B cell (primary cell): ENCODE measurements at regions of chr1 and their contacts with region 1.

Region 1: DNA sequence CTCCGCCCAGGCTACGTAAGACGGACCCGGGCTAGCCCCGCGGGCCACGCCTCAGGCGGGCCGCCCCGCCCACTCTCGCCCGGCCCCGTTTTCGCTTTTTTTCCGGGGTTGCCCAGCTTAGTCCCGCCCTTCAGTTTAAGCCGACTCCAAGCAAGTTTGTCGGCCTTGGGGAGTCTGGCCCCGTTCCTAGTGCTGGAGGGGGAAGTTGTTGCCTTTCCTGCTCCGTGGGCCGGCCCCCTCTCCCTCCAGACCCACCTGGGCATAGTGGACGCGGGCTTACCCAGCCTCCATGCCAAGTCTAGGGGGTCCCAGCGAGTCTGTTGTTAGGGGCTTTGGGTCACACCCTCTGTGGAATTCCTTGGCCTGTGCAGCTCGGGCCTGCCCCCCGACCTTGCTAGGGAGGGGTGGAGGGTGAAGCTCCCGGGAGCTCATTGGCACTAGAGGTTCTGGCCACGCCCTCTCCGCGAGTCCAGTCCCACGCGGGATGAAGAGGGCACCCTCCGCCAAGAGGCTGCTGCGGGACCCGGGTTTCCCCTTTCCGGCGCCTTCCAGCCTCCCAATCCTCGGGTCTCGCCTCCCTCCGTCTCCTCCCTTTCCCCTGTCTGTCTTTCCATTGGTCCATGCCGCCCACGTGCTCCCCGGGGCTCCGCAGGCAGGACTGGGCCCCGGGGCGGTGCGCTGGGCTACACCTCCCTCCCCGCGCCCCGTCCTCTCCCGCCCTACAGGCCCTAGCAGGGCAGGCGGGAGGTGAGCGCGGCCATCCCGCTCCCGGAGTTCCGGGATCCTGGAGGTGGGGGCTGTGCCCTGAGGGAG is 3.3 kb downstream of the RUSC1 start:
- DNase-seq: peak; percentile 89
- ATAC-seq: peak; percentile 74
- H3K4me3 ChIP-seq: peak overlapping the region; percentile 64 to 100 (median 97)
- H3K4me3 Mint-ChIP-seq: peak overlapping the region; percentile 92
- H3K27ac ChIP-seq: peak overlapping the region; percentile 81 to 85
- H3K27ac Mint-ChIP-seq: peak overlapping the region; percentile 87
- H3K4me1 ChIP-seq: peaks cover 17 to 35% of the 10 kb centered on the region in 2 donors
- H3K4me1 Mint-ChIP-seq: peaks cover 32% of the 10 kb centered on the region
- H3K27me3 ChIP-seq: no peaks in the 10 kb centered on the region
- H3K27me3 Mint-ChIP-seq: no peaks in the 10 kb centered on the region
- CTCF ChIP-seq: no peak

Region 2: GRCh38 chr1:155208541-155209311 is 115.3 kb before region 1 on chr1 and contains the start of gene MTX1:
- CTCF ChIA-PET with region 1: interaction called, 20 read pairs
- POLR2A ChIA-PET with region 1: interaction called, 3 read pairs
- intact Hi-C with region 1: loop called (anchors 1 kb)
- DNase-seq: peak; percentile 95
- ATAC-seq: peak; percentile 79
- H3K4me3 ChIP-seq: peak within 1 kb of the TSS; percentile 67 to 94 (median 84)
- H3K4me3 Mint-ChIP-seq: peak within 1 kb of the TSS; percentile 81
- H3K27ac ChIP-seq: peak within 1 kb of the TSS; percentile 95 to 100
- H3K27ac Mint-ChIP-seq: peak within 1 kb of the TSS; percentile 91
- H3K4me1 ChIP-seq: peaks cover 21 to 26% of the 10 kb centered on the region in 2 donors
- H3K4me1 Mint-ChIP-seq: peaks cover 22% of the 10 kb centered on the region
- H3K27me3 ChIP-seq: no peaks in the 10 kb centered on the region
- H3K27me3 Mint-ChIP-seq: no peaks in the 10 kb centered on the region
- CTCF ChIP-seq: no peak
- total RNA-seq, gene MTX1: 18.4 and 19.0 TPM in 2 replicates

Region 3: DNA sequence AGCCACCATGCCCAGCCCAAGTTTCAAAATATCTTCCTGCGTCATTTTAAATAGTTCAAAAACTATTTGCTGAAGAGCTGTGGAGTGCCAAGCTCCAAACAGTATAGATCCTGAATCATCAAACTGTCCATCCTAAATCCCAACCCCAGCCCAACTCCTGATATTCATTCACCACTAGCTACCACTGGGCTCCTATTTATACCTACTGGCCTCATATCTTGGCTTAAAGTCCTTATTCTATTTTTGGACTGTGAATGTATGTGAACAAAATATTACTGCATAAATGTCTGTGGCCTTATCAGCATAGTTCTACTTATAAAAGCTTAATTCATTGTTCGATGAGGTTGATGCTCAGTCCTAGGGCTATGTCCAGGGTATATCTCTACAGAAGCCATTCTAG is 56.6 kb before region 1 on chr1:
- CTCF ChIA-PET with region 1: interaction called, 22 read pairs
- POLR2A ChIA-PET with region 1: interaction called, 6 read pairs
- intact Hi-C with region 1: loop called (anchors 1 kb)
- DNase-seq: no peak
- ATAC-seq: no peak
- H3K4me3 ChIP-seq: no peak overlapping the region
- H3K4me3 Mint-ChIP-seq: no peak overlapping the region
- H3K27ac ChIP-seq: no peak overlapping the region
- H3K27ac Mint-ChIP-seq: no peak overlapping the region
- H3K4me1 ChIP-seq: peaks cover 3 to 15% of the 10 kb centered on the region in 2 donors
- H3K4me1 Mint-ChIP-seq: peaks cover 15% of the 10 kb centered on the region
- H3K27me3 ChIP-seq: no peaks in the 10 kb centered on the region
- H3K27me3 Mint-ChIP-seq: no peaks in the 10 kb centered on the region
- CTCF ChIP-seq: no peak

Region 4: GRCh38 chr1:155308493-155309422 is 15.2 kb before region 1 on chr1 and contains the start of gene FDPS:
- CTCF ChIA-PET with region 1: interaction called, 31 read pairs
- POLR2A ChIA-PET with region 1: interaction called, 4 read pairs
- intact Hi-C with region 1: loop called (anchors 1 kb)
- DNase-seq: peak; percentile 99
- ATAC-seq: peak; percentile 99
- H3K4me3 ChIP-seq: peak within 1 kb of the TSS; percentile 62 to 100 (median 88)
- H3K4me3 Mint-ChIP-seq: peak within 1 kb of the TSS; percentile 93
- H3K27ac ChIP-seq: peak within 1 kb of the TSS; percentile 91 to 94
- H3K27ac Mint-ChIP-seq: peak within 1 kb of the TSS; percentile 93
- H3K4me1 ChIP-seq: peaks cover 10 to 23% of the 10 kb centered on the region in 2 donors
- H3K4me1 Mint-ChIP-seq: peaks cover 27% of the 10 kb centered on the region
- H3K27me3 ChIP-seq: no peaks in the 10 kb centered on the region
- H3K27me3 Mint-ChIP-seq: no peaks in the 10 kb centered on the region
- CTCF ChIP-seq: no peak
- total RNA-seq, gene FDPS: 128 and 141 TPM in 2 replicates

Region 5: DNA sequence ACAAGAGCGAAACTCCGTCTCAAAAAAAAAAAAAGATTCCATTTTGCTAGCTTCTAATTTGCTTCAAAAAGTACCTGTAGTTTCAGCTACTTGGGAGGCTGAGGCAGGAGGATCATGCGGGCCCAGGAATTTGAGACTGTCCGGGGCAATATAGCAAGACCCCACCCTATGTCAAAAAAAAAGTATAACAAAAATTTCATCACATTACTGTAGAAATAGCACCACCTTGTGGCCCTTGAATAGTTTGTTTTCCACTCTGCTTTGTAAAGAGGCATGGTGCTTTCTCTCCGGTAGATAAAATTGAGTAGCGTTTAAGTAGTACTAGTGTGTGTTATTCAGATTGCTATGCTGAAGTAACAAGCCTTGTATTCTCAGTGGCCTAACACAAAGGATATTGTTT is 267.8 kb after region 1 on chr1:
- CTCF ChIA-PET with region 1: interaction called, 5 read pairs
- POLR2A ChIA-PET with region 1: interaction called, 3 read pairs
- intact Hi-C with region 1: loop called (anchors 5 kb)
- DNase-seq: peak; percentile 74
- ATAC-seq: peak; percentile 60
- H3K4me3 ChIP-seq: no peak overlapping the region
- H3K4me3 Mint-ChIP-seq: no peak overlapping the region
- H3K27ac ChIP-seq: no peak overlapping the region
- H3K27ac Mint-ChIP-seq: no peak overlapping the region
- H3K4me1 ChIP-seq: no peaks in the 10 kb centered on the region
- H3K4me1 Mint-ChIP-seq: no peaks in the 10 kb centered on the region
- H3K27me3 ChIP-seq: no peaks in the 10 kb centered on the region
- H3K27me3 Mint-ChIP-seq: no peaks in the 10 kb centered on the region
- CTCF ChIP-seq: peak; percentile 75